ENCODE measurements at regions of chr12 and their contacts with region 1.

Region 1: DNA sequence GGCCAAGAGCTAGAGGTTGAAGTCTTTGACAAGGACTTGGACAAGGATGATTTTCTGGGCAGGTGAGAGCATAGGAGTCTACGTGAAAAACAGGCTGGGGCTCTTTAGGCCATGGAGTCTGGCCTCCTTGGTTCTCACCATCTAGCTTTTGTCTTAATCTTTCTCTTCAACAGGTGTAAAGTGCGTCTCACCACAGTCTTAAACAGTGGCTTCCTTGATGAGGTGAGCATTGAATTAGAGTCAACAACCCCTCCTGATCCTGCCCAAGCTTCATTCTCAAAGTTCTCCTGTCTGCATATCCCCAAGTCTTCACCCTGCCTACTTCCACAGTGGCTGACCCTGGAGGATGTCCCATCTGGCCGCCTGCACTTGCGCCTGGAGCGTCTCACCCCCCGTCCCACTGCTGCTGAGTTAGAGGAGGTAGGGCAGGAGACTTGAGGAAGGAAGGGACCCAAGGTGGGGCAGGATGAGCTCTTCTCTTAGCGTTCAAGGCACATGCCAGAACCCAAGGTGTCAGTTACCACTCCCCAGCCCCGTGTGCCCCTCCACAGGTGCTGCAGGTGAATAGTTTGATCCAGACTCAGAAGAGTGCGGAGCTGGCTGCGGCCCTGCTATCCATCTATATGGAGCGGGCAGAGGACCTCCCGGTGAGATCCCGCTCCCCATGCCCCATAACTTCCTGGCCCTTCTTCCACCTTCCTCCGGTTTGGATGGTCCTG is 9.9 kb downstream of the ESYT1 start:
- DNase-seq: no peak
- H3K4me3 ChIP-seq: no peak overlapping the region
- H3K4me3 Mint-ChIP-seq: peak overlapping the region in 7 of 8 donors; percentile 19 to 84 (median 74)
- H3K27ac ChIP-seq: peak overlapping the region; percentile 22
- H3K27ac Mint-ChIP-seq: peak overlapping the region; percentile 77 to 90 (median 86)
- H3K4me1 ChIP-seq: peaks cover 74% of the 10 kb centered on the region
- H3K4me1 Mint-ChIP-seq: peaks cover 41 to 72% (median 54%) of the 10 kb centered on the region in 4 donors
- H3K27me3 ChIP-seq: no peaks in the 10 kb centered on the region
- H3K27me3 Mint-ChIP-seq: no peaks in the 10 kb centered on the region

Region 2: DNA sequence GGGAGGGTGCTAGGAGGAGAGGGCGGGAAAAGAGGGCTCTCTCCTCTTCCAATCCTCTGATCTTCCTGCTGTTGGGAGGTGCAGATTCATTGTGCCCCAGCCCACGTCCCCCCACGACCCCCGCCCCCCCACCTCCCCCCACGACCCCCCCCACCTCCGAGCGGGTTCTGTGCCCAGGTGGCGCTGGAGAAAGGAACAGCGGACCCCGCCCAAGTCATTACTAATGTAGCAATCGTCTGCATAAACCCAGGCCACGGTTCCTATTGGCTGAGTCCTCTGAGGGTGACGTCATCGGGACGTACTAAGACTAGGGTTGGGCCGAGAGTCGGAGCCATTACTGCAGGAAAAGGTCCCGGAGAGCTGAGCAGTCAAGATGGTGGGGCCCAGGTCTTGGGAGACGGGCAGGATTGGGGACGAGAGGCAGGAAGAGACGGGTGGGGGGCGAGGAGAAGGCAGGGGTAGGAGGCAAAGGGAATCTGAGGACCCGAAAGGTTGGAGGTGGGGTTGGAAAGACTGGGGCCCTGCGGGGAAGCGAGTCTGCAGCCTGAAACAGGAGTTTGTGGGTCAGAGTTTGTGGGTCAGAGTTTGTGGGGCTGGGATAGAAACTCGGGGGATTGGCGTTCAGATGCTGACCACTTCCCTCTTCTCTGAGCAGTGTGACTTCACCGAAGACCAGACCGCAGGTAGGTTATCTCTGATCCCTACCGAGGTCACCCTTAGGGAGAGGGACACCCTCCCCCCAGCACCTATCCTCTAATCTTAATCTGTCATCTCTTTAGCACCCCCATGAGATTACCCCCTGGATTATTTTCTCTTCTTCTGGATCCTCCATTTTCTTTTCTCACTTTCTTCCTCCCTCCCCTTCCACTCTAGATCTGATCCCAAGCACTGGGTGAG is 20.3 kb after region 1 on chr12 and contains the start of gene MYL6:
- CTCF ChIA-PET with region 1: interaction called, 4 read pairs
- POLR2A ChIA-PET with region 1: interaction called, 41 read pairs
- intact Hi-C with region 1: no loop called
- DNase-seq: peak; percentile 88 to 98 (median 91)
- H3K4me3 ChIP-seq: peak within 1 kb of the TSS; percentile 86 to 89
- H3K4me3 Mint-ChIP-seq: peak within 1 kb of the TSS; percentile 93 to 100 (median 97)
- H3K27ac ChIP-seq: peak within 1 kb of the TSS; percentile 97
- H3K27ac Mint-ChIP-seq: peak within 1 kb of the TSS; percentile 96 to 100 (median 99)
- H3K4me1 ChIP-seq: peaks cover 40% of the 10 kb centered on the region
- H3K4me1 Mint-ChIP-seq: peaks cover 28 to 64% (median 37%) of the 10 kb centered on the region in 4 donors
- H3K27me3 ChIP-seq: no peaks in the 10 kb centered on the region
- H3K27me3 Mint-ChIP-seq: no peaks in the 10 kb centered on the region
- total RNA-seq, gene MYL6: 567 to 589 TPM